Activated CD4-positive, alpha-beta T cell treated with anti-CD3 and anti-CD28 coated beads for 36 hours (primary cell): ENCODE measurements at regions of chr1 and their contacts with region 1.

Region 1: GRCh38 chr1:160006312-160006940 is 25.4 kb downstream of the PIGM start:
- DNase-seq: peak; percentile 88
- ATAC-seq: peak; percentile 90
- H3K4me3 Mint-ChIP-seq: no peak overlapping the region
- H3K27ac Mint-ChIP-seq: no peak overlapping the region
- H3K4me1 Mint-ChIP-seq: no peaks in the 10 kb centered on the region
- H3K27me3 Mint-ChIP-seq: peaks cover 11% of the 10 kb centered on the region

Region 2: DNA sequence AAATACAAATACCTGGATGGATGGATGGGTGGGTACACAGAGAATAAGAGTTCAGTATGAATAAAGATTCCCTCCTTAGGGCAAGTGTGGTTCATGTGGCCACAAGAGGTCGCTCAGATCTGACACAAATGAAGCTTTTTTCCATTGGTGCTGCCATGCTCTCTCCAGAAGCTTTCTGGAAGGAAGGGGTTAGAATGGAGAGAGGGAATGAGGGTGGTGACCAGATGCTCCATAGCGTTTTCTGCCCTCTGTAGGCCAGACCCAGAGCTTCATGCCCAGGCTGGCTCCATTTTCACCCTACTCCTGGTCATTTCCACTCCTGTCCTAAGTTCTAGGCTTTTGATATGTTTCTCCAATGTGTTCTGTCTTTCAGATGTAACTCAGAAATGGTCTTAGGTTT is 207.5 kb before region 1 on chr1:
- CTCF ChIA-PET with region 1: interaction called, 53 read pairs
- POLR2A ChIA-PET with region 1: no interaction called
- intact Hi-C with region 1: loop called (anchors 1 kb)
- DNase-seq: peak; percentile 68
- ATAC-seq: peak; percentile 78
- H3K4me3 Mint-ChIP-seq: no peak overlapping the region
- H3K27ac Mint-ChIP-seq: no peak overlapping the region
- H3K4me1 Mint-ChIP-seq: peaks cover 12% of the 10 kb centered on the region
- H3K27me3 Mint-ChIP-seq: peaks cover 1% of the 10 kb centered on the region

Region 3: GRCh38 chr1:159924981-159925712 is 81.3 kb before region 1 on chr1 and contains the start of gene TAGLN2:
- CTCF ChIA-PET with region 1: interaction called, 237 read pairs
- POLR2A ChIA-PET with region 1: interaction called, 5 read pairs
- intact Hi-C with region 1: no loop called
- DNase-seq: peak; percentile 94
- ATAC-seq: peak; percentile 69
- H3K4me3 Mint-ChIP-seq: peak within 1 kb of the TSS; percentile 95
- H3K27ac Mint-ChIP-seq: peak within 1 kb of the TSS; percentile 98
- H3K4me1 Mint-ChIP-seq: peaks cover 38% of the 10 kb centered on the region
- H3K27me3 Mint-ChIP-seq: no peaks in the 10 kb centered on the region
- total RNA-seq, gene TAGLN2: 410 to 495 TPM

Region 4: GRCh38 chr1:159970932-159971342 is 35.5 kb before region 1 on chr1:
- CTCF ChIA-PET with region 1: interaction called, 27 read pairs
- POLR2A ChIA-PET with region 1: no interaction called
- intact Hi-C with region 1: no loop called
- DNase-seq: no peak
- ATAC-seq: no peak
- H3K4me3 Mint-ChIP-seq: no peak overlapping the region
- H3K27ac Mint-ChIP-seq: no peak overlapping the region
- H3K4me1 Mint-ChIP-seq: no peaks in the 10 kb centered on the region
- H3K27me3 Mint-ChIP-seq: peaks cover 16% of the 10 kb centered on the region

Region 5: DNA sequence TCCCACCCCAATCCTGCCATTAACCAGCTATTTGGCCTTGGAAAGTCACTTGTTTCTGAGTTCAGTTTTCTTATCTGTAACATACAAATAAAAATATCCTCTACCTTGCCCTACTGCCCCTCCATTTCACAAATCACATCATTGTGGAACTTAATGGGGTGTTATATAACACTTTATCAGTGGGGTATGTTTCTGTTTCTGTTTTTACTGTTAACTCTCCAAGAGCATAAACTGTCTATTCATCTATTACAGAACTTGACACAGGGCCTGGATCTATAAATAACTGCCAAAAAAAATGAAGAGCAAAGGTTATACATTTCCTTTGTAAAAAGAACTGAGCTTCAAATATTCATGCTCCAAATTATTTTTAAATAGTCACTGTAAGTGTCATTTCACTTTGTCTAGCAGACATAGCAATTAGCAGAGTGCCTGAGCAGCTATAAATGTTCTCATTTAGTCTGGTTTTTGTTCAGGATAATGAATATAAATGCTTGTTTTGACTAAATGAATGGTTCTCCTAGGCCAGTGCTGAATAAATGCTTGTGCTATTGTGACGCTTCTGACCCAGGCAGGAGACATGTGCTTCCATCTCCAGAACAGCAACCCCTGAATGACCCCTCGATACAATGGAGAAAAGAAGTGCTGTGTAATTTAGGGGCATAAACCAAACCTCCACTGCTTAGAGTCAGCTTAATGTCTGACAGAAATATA is 17.9 kb after region 1 on chr1:
- CTCF ChIA-PET with region 1: interaction called, 91 read pairs
- POLR2A ChIA-PET with region 1: interaction called, 6 read pairs
- intact Hi-C with region 1: no loop called
- DNase-seq: no peak
- ATAC-seq: no peak
- H3K4me3 Mint-ChIP-seq: no peak overlapping the region
- H3K27ac Mint-ChIP-seq: no peak overlapping the region
- H3K4me1 Mint-ChIP-seq: peaks cover 7% of the 10 kb centered on the region
- H3K27me3 Mint-ChIP-seq: no peaks in the 10 kb centered on the region

Region 6: GRCh38 chr1:160078512-160079195 is 72.2 kb after region 1 on chr1:
- CTCF ChIA-PET with region 1: interaction called, 44 read pairs
- POLR2A ChIA-PET with region 1: no interaction called
- intact Hi-C with region 1: loop called in 1 of 2 experiments (anchors 1 kb)
- DNase-seq: peak; percentile 84
- ATAC-seq: peak; percentile 93
- H3K4me3 Mint-ChIP-seq: no peak overlapping the region
- H3K27ac Mint-ChIP-seq: no peak overlapping the region
- H3K4me1 Mint-ChIP-seq: peaks cover 18% of the 10 kb centered on the region
- H3K27me3 Mint-ChIP-seq: peaks cover 48% of the 10 kb centered on the region

Region 7: GRCh38 chr1:160226623-160227022 is 220.2 kb after region 1 on chr1:
- CTCF ChIA-PET with region 1: no interaction called
- POLR2A ChIA-PET with region 1: no interaction called
- intact Hi-C with region 1: no loop called
- DNase-seq: no peak
- ATAC-seq: no peak
- H3K4me3 Mint-ChIP-seq: no peak overlapping the region
- H3K27ac Mint-ChIP-seq: no peak overlapping the region
- H3K4me1 Mint-ChIP-seq: no peaks in the 10 kb centered on the region
- H3K27me3 Mint-ChIP-seq: no peaks in the 10 kb centered on the region

Region 8: GRCh38 chr1:160315359-160315758 is 308.9 kb after region 1 on chr1:
- CTCF ChIA-PET with region 1: no interaction called
- POLR2A ChIA-PET with region 1: no interaction called
- intact Hi-C with region 1: no loop called
- DNase-seq: no peak
- ATAC-seq: no peak
- H3K4me3 Mint-ChIP-seq: no peak overlapping the region
- H3K27ac Mint-ChIP-seq: peak overlapping the region; percentile 45
- H3K4me1 Mint-ChIP-seq: peaks cover 17% of the 10 kb centered on the region
- H3K27me3 Mint-ChIP-seq: no peaks in the 10 kb centered on the region

Region 9: GRCh38 chr1:160451119-160451858 is 444.9 kb after region 1 on chr1:
- CTCF ChIA-PET with region 1: no interaction called
- POLR2A ChIA-PET with region 1: no interaction called
- intact Hi-C with region 1: no loop called
- DNase-seq: no peak
- ATAC-seq: peak; percentile 33
- H3K4me3 Mint-ChIP-seq: peak overlapping the region; percentile 48
- H3K27ac Mint-ChIP-seq: peak overlapping the region; percentile 95
- H3K4me1 Mint-ChIP-seq: peaks cover 82% of the 10 kb centered on the region
- H3K27me3 Mint-ChIP-seq: no peaks in the 10 kb centered on the region